AG04450 (cell line): ENCODE measurements at regions of chr10 and their contacts with region 1.

Region 1: DNA sequence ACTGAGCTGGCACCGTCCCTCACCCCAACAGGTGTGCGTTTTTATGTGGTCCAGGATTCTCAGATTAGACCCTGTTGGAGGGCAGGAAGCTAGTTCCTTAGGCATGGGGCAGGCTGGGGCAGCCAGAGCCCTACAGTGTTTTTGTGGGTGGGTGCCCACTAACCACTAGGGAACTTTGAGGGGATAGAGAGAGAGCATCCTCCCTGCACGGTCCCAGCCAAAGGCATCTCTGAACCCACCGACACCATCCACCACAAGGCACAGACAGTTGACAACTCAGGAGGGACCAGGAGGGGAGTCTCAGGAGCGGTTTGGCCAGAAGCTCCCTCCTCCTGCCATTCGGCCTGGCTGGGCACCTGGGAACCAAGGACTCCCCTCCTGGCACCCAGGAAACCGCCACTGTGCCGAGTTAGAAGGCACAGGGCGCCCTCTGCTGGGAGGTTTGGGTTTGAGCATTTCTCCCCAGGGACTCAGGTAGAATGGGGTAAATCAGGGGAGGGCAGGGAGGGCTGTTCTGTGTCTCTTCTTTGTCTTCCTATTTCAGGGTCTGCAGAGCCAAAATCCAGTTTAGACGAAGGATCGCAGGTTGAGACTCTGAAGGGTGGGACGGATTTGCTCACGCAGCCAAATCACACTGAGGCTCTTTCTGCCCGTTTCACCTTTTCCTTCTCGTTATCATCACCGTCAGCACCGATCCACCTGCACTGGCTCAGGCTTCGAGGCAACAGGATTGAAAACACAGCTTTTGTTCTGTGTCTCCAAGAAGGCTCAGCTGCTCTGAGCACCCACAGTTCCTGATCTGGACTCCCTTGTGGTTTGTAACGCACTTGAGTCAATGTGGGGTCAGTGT is 84.8 kb upstream of the COL13A1 start:
- DNase-seq: no peak
- H3K4me3 ChIP-seq: no peak overlapping the region
- H3K27ac ChIP-seq: no peak overlapping the region
- H3K27me3 ChIP-seq: peaks cover 5% of the 10 kb centered on the region
- CTCF ChIP-seq: peak; percentile 77

Region 2: GRCh38 chr10:69644658-69645295 is 72.2 kb before region 1 on chr10:
- CTCF ChIA-PET with region 1: interaction called, 125 read pairs
- POLR2A ChIA-PET with region 1: no interaction called
- DNase-seq: peak; percentile 20
- H3K4me3 ChIP-seq: no peak overlapping the region
- H3K27ac ChIP-seq: no peak overlapping the region
- H3K27me3 ChIP-seq: peaks cover 51% of the 10 kb centered on the region
- CTCF ChIP-seq: peak; percentile 87

Region 3: GRCh38 chr10:69696073-69696731 is 20.7 kb before region 1 on chr10:
- CTCF ChIA-PET with region 1: interaction called, 56 read pairs
- POLR2A ChIA-PET with region 1: no interaction called
- DNase-seq: peak; percentile 69
- H3K4me3 ChIP-seq: no peak overlapping the region
- H3K27ac ChIP-seq: no peak overlapping the region
- H3K27me3 ChIP-seq: peaks cover 19% of the 10 kb centered on the region
- CTCF ChIP-seq: peak; percentile 73

Region 4: GRCh38 chr10:69728335-69728870 is 11.5 kb after region 1 on chr10:
- CTCF ChIA-PET with region 1: interaction called, 44 read pairs
- POLR2A ChIA-PET with region 1: interaction called, 3 read pairs
- DNase-seq: no peak
- H3K4me3 ChIP-seq: no peak overlapping the region
- H3K27ac ChIP-seq: no peak overlapping the region
- H3K27me3 ChIP-seq: peaks cover 11% of the 10 kb centered on the region
- CTCF ChIP-seq: no peak

Region 5: GRCh38 chr10:69807122-69807521 is 90.2 kb after region 1 on chr10:
- CTCF ChIA-PET with region 1: interaction called, 11 read pairs
- POLR2A ChIA-PET with region 1: no interaction called
- DNase-seq: peak; percentile 41
- H3K4me3 ChIP-seq: no peak overlapping the region
- H3K27ac ChIP-seq: peak overlapping the region; percentile 63
- H3K27me3 ChIP-seq: no peaks in the 10 kb centered on the region
- CTCF ChIP-seq: no peak

Region 6: GRCh38 chr10:70063418-70064098 is 346.6 kb after region 1 on chr10:
- CTCF ChIA-PET with region 1: no interaction called
- POLR2A ChIA-PET with region 1: no interaction called
- DNase-seq: no peak
- H3K4me3 ChIP-seq: no peak overlapping the region
- H3K27ac ChIP-seq: no peak overlapping the region
- H3K27me3 ChIP-seq: no peaks in the 10 kb centered on the region
- CTCF ChIP-seq: no peak

Region 7: DNA sequence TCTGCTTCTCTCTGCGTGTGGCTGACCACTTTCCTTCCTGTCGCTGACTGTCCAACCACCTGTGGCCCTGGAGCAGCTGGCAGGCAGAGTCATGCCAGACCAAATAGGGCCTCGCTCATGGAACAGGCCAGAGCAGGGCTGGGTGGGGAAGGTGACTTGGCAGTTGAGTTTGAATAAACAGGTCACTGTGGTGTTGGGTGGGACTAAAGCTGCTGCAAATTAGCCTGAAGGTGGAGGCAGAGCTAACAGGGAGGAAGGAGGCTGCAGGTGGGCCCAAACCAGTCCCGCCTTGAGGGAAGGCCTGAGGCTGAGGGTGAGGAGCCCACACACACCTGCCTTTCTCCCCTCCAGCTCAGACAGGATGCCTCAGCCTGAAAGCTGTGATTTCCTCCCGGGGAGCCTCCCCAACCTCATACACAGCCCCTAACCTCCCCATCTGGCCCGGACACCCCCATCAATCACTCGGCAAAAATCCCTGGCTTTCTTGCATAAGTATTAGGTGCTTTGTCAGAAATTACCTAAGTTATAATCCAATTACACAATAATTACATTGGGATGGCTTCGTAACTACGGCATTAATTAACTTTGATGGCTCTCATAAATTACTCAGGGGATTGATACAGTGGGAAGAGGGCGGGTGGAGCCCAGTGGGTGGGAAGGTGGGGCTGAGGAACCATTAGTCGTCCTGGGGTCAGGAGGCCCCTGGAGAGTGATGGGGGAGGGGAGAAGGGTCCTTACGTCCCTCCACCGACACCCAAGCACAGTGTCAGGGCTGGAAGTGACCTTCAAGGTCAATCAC is 1269.1 kb after region 1 on chr10:
- CTCF ChIA-PET with region 1: no interaction called
- POLR2A ChIA-PET with region 1: no interaction called
- DNase-seq: no peak
- H3K4me3 ChIP-seq: no peak overlapping the region
- H3K27ac ChIP-seq: no peak overlapping the region
- H3K27me3 ChIP-seq: peaks cover 17% of the 10 kb centered on the region
- CTCF ChIP-seq: no peak